ENCODE measurements at regions of chr2 and their contacts with region 1.

Region 1: DNA sequence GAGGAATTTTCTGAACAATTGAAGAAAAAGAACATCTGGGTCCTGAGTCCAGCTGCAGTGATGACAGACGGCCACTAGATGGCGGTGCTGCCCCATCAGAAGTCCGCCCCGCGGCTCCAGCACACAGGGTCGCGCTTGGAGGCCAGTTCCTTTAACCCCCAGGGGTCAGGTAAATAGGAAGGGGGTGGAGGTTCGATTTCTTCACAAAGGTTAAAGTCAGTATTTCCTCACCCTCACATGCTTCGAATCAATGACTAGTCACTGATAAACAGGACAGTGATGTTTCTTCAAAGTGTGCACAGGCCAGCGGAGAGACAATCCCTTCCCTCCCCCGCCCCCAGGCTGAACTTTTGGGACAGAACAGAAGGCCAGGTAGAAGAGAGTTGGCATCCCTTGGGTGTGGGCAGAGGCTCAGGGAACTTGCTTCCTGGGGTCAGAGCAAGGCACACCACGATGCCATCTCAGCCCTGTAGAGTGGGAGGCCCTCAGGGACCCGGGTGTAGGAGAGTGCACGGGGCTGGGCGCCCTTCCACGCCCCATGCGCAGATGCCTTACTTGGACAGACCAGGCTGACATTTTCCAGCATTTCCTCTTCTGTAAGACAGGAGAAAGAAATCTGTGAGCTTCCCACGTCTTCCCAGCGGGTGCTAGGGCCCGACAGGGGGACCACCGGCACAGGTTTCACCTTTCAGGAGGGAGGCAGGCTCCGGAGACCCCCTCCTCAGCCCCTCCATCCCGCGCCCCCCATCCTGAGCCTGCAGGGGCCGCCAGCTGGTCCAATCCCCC is 722 bp downstream of the APOB start:
- DNase-seq: peak in 1 of 2 experiments; percentile 45
- H3K4me3 ChIP-seq: no peak overlapping the region
- H3K27ac ChIP-seq: no peak overlapping the region
- H3K4me1 ChIP-seq: no peaks in the 10 kb centered on the region
- H3K27me3 ChIP-seq: peaks cover 16% of the 10 kb centered on the region
- CTCF ChIP-seq: peak; percentile 100

Region 2: GRCh38 chr2:19425419-19425818 is 1617.7 kb before region 1 on chr2:
- CTCF ChIA-PET with region 1: no interaction called
- POLR2A ChIA-PET with region 1: no interaction called
- intact Hi-C with region 1: no loop called
- DNase-seq: no peak
- H3K4me3 ChIP-seq: no peak overlapping the region
- H3K27ac ChIP-seq: no peak overlapping the region
- H3K4me1 ChIP-seq: no peaks in the 10 kb centered on the region
- H3K27me3 ChIP-seq: no peaks in the 10 kb centered on the region
- CTCF ChIP-seq: no peak

Region 3: GRCh38 chr2:21118302-21118920 is 75.3 kb after region 1 on chr2:
- CTCF ChIA-PET with region 1: no interaction called
- POLR2A ChIA-PET with region 1: no interaction called
- intact Hi-C with region 1: loop called (anchors 2 kb)
- DNase-seq: peak in 1 of 2 experiments; percentile 15
- H3K4me3 ChIP-seq: no peak overlapping the region
- H3K27ac ChIP-seq: no peak overlapping the region
- H3K4me1 ChIP-seq: no peaks in the 10 kb centered on the region
- H3K27me3 ChIP-seq: no peaks in the 10 kb centered on the region
- CTCF ChIP-seq: peak; percentile 61

Region 4: DNA sequence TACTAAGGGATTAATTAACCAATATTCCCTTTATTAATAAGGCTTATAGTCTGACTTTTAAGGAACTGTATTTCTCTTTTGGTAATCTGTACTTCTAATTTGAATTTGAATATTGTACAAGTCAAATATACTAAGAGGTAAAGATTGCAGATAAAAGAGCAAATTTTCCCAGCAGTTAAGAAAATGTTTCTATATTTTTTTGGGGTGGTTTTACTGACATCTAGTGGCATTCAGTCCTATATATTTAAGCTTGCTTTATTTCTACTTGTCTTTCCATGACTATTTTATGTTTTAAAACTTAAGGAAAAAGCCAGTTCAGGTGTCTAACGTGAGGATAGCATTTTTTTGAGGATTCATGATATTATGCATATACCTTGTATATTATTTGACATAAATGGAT is 122.2 kb after region 1 on chr2:
- CTCF ChIA-PET with region 1: no interaction called
- POLR2A ChIA-PET with region 1: no interaction called
- intact Hi-C with region 1: loop called (anchors 2 kb)
- DNase-seq: no peak
- H3K4me3 ChIP-seq: no peak overlapping the region
- H3K27ac ChIP-seq: no peak overlapping the region
- H3K4me1 ChIP-seq: no peaks in the 10 kb centered on the region
- H3K27me3 ChIP-seq: no peaks in the 10 kb centered on the region
- CTCF ChIP-seq: peak; percentile 52

Region 5: GRCh38 chr2:21317131-21317530 is 274.0 kb after region 1 on chr2:
- CTCF ChIA-PET with region 1: no interaction called
- POLR2A ChIA-PET with region 1: no interaction called
- intact Hi-C with region 1: loop called (anchors 1 kb)
- DNase-seq: peak in 1 of 2 experiments; percentile 6
- H3K4me3 ChIP-seq: no peak overlapping the region
- H3K27ac ChIP-seq: no peak overlapping the region
- H3K4me1 ChIP-seq: no peaks in the 10 kb centered on the region
- H3K27me3 ChIP-seq: no peaks in the 10 kb centered on the region
- CTCF ChIP-seq: peak; percentile 77

Region 6: DNA sequence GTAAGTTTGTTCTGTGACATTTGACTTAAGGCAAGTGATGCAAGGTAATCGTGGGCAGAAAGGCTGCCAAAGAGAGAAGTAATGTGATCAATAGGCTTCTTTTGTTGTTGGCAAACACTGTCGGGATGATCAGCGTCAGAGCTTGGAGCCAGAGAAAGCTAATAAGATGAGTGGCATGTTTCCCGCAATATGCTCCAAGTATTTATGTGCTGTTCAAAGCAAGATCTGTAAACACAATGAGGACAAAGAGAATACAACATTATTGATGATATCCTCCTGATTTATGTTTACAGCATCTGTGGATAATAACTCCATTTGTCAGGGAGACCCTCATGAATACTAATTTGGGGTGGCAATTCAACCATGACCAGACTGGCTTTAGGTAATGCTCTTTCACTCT is 684.0 kb after region 1 on chr2:
- CTCF ChIA-PET with region 1: no interaction called
- POLR2A ChIA-PET with region 1: no interaction called
- intact Hi-C with region 1: no loop called
- DNase-seq: no peak
- H3K4me3 ChIP-seq: no peak overlapping the region
- H3K27ac ChIP-seq: no peak overlapping the region
- H3K4me1 ChIP-seq: no peaks in the 10 kb centered on the region
- H3K27me3 ChIP-seq: no peaks in the 10 kb centered on the region
- CTCF ChIP-seq: no peak

Measured in PC-9 (cell line).